AG04450 (cell line): ENCODE measurements at regions of chr15 and their contacts with region 1.

Region 1: GRCh38 chr15:30985081-30985531 is 6.3 kb downstream of the MTMR10 start:
- DNase-seq: no peak
- H3K4me3 ChIP-seq: no peak overlapping the region
- H3K27ac ChIP-seq: no peak overlapping the region
- H3K27me3 ChIP-seq: no peaks in the 10 kb centered on the region
- CTCF ChIP-seq: no peak

Region 2: DNA sequence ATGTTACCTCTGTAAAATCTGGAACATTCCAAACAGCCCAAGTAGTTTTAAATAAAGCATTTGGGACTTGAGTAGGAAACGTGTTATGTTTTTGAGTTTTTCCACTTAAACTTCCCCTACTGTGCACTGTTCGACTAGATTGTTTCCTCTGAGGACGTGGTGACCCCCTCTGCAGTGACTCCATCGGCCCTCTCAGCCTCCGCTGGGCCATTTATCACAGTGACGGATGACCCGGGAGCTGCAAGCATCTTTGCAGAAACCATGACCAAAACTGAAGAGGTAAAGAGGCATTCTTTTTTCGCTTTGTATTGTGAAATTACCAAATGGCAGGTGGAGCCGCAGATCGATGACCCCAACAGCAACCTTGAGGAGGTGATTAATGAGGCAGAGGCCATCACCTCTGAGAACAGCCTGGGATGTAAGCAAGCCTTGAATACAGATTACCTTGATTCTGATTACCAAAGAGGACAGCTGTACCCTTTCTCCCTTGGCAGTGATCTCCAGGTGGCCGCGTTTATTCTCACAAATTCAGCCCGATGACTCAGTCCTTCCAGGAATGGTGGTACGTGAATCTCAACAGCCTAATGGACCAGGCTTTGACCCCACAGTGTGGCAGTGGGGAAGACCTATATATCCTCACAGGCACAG is 160.5 kb before region 1 on chr15:
- CTCF ChIA-PET with region 1: no interaction called
- POLR2A ChIA-PET with region 1: no interaction called
- DNase-seq: no peak
- H3K4me3 ChIP-seq: no peak overlapping the region
- H3K27ac ChIP-seq: no peak overlapping the region
- H3K27me3 ChIP-seq: no peaks in the 10 kb centered on the region
- CTCF ChIP-seq: no peak

Region 3: DNA sequence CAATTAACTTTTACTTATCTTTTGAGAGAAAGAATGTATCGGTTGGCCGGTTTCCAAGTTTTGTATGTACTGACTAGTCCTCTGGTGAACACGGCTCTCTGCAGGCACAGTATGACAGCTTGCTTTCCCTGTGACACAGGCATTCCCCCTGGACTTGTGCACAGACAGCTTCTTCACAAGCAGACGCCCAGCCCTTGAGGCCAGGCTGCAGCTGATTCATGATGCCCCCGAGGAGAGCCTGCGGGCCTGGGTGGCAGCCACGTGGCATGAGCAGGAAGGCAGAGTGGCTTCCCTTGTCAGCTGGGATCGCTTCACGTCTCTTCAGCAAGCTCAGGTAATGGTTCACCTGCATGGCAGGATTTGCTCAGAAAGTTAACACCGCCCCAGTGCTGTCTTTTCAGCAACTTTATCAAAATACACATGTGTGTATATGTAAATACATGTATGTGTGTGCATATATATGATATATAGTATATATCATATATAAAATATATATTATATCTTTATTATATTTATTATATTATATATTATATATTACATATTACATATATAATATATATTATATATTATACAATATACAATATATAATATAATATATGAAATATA is 55.9 kb before region 1 on chr15:
- CTCF ChIA-PET with region 1: interaction called, 11 read pairs
- POLR2A ChIA-PET with region 1: no interaction called
- DNase-seq: no peak
- H3K4me3 ChIP-seq: no peak overlapping the region
- H3K27ac ChIP-seq: no peak overlapping the region
- H3K27me3 ChIP-seq: no peaks in the 10 kb centered on the region
- CTCF ChIP-seq: no peak

Region 4: DNA sequence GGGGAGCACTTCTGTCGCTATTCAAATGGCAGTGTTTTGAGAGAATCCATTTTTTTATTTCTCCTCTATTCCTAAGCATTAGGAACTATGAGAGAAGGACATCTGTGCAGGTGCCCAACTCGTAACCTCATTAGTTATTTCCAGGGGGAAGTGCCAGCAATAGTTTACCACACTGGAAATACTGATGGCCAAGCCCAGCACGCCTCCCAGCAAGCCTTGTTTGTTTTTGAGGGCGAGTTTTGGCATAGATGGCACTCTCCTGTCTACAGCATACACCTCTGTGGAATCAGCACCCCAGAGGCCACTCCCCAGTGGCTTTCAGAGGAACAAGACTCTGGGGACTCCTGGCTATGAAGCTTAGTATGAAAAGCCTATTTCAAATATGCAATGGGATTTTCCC is 44.7 kb before region 1 on chr15:
- CTCF ChIA-PET with region 1: no interaction called
- POLR2A ChIA-PET with region 1: no interaction called
- DNase-seq: no peak
- H3K4me3 ChIP-seq: no peak overlapping the region
- H3K27ac ChIP-seq: no peak overlapping the region
- H3K27me3 ChIP-seq: no peaks in the 10 kb centered on the region
- CTCF ChIP-seq: no peak